ENCODE measurements at regions of chr20 and their contacts with region 1.

Region 1: DNA sequence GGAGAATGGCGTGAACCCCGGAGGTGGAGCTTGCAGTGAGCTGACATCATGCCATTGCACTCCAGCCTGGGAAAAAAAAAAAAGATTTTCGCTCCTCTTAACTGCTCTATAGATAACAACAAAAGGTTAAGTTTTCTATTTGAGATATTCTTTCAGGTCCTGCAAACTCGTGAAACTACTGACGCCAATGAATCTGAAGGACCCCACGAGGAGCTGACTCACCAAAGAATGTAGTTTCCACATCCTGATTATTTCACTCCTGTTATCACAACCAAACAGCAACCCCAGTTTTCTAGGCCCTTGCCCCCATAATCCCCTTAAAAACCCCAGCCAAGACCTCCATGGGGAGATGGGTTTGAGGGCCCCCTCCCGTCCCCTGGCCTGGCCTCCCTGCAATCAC is 58.7 kb downstream of the OTOR start:
- DNase-seq: no peak
- H3K4me3 ChIP-seq: no peak overlapping the region
- H3K27ac ChIP-seq: no peak overlapping the region
- H3K4me1 ChIP-seq: no peaks in the 10 kb centered on the region
- H3K27me3 ChIP-seq: peaks cover 3% of the 10 kb centered on the region
- CTCF ChIP-seq: no peak

Region 2: GRCh38 chr20:16975682-16976081 is 168.8 kb after region 1 on chr20:
- intact Hi-C with region 1: no loop called
- DNase-seq: peak in 1 of 5 donors; percentile 50
- H3K4me3 ChIP-seq: no peak overlapping the region
- H3K27ac ChIP-seq: no peak overlapping the region
- H3K4me1 ChIP-seq: no peaks in the 10 kb centered on the region
- H3K27me3 ChIP-seq: no peaks in the 10 kb centered on the region
- CTCF ChIP-seq: no peak

Region 3: DNA sequence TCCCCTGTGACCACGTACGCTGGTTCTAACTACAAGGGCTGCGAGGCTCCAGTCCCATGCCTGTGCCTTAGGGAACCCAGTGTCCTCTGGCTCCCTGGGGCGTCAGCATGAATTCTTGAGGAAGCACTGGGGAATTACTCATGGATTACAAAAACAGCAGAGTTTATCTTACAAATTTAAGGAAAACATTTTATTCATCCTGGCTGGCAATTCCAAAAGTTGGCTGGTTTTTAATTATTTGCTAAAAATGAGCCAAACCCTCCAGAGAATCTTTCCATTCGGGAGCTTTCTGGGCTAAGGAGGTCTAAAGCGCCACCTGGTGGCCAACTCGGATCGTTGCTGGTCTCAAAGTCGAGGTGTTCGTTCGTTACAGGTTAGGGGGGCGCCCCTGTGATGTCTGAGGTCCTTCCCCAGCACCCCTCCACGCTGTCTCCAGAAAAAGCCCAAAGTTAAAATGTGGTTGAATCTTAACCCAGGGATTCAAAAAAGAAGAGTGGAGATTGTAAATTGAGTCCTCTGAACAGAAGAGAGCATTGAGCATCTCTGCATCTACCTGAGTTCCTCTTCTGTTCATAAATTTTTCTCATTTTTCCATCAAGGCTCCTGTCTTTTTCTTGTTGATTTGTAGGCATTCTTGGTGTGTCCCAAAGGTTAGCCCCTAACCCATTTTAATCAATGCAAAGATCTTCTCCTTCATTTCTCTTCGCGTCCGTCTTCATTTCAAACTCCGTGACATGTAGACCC is 624.9 kb after region 1 on chr20:
- intact Hi-C with region 1: loop called (anchors 5 kb)
- DNase-seq: peak in 4 of 5 donors; percentile 55 to 74 (median 64)
- H3K4me3 ChIP-seq: no peak overlapping the region
- H3K27ac ChIP-seq: no peak overlapping the region
- H3K4me1 ChIP-seq: peaks cover 0 to 6% (median 0%) of the 10 kb centered on the region in 3 donors
- H3K27me3 ChIP-seq: no peaks in the 10 kb centered on the region
- CTCF ChIP-seq: peak; percentile 80